A549 (cell line): ENCODE measurements at regions of chr17 and their contacts with region 1.

Region 1: DNA sequence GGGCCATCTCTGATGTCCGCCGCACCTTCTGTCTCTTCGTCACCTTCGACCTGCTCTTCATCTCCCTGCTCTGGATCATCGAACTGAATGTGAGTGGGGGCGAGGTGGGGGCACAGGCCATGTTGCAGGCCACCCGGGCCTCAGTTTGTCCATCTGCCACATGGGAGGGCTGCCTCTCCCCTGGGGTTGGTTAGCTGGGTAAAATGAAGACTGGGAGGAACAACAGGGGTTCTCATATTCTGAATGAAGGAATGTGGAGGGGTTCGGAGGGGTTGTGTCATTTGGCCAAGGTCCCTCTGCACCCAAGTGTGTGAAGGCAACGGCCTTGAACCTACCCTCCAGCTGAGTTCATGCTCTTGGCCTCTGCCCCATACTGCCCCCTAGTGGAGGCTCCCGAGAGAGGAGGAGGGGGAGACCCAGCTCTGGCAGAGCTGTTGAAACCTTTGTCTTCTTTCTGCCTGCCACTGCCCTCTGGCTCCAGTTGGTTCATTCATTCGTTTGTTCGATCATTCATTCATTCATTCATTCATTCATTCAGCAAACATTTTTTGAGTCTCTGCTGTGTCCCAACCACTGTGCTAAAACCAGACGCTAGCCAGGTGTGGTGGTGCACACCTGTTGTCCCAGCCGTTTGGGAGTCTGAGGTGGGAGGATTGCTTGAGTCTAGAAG is 11.4 kb upstream of the TCAP start:
- DNase-seq: peak; percentile 67 to 91
- ATAC-seq: peak; percentile 65 to 86; a peak in 5 of 6 replicates
- H3K4me3 ChIP-seq: no peak overlapping the region
- H3K27ac ChIP-seq: no peak overlapping the region
- H3K4me1 ChIP-seq: no peaks in the 10 kb centered on the region
- CTCF ChIP-seq: peak; percentile 90
- EP300 ChIP-seq: no peak
- POLR2A ChIP-seq: no peak
- RAD21 ChIP-seq: peak; percentile 28 to 41; a peak in 3 of 5 replicates

Region 2: DNA sequence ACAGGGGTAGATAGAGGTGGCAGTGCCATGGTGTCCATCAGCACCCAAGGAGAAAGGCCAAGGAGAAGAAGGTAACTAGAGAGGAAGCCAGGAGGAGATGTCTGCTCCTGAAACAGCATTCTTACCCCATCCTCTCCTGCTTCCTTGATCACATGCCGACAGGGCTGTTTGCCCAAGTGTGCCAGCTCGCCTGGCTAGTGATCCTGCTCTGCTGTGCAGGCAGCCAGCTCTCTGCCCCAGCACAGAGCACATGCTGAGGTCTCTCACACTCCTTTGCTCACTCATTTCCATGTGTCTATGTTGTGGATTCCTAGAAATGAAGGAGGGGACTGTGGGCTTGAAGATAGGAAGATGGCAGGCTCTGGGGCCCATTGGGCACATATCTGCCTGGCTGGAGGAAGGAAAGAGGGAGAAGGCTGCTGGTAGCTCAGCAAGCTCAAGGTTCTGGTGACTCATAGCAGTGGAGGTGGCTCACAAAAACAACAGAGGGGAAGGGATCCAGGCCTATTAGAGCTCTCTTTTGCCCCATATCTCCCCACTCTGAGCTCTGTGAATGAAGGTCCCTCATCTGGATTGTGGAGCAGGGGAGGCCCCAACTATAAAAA is 100.4 kb before region 1 on chr17:
- CTCF ChIA-PET with region 1: interaction called, 17 read pairs
- POLR2A ChIA-PET with region 1: interaction called, 4 read pairs
- DNase-seq: no peak
- ATAC-seq: peak in 1 of 2 experiments; percentile 37; a peak in 2 of 6 replicates
- H3K4me3 ChIP-seq: no peak overlapping the region
- H3K27ac ChIP-seq: no peak overlapping the region
- H3K4me1 ChIP-seq: no peaks in the 10 kb centered on the region
- CTCF ChIP-seq: no peak
- EP300 ChIP-seq: no peak
- POLR2A ChIP-seq: no peak
- RAD21 ChIP-seq: no peak

Region 3: GRCh38 chr17:39568702-39569101 is 85.1 kb before region 1 on chr17:
- CTCF ChIA-PET with region 1: no interaction called
- POLR2A ChIA-PET with region 1: no interaction called
- DNase-seq: no peak
- ATAC-seq: no peak
- H3K4me3 ChIP-seq: no peak overlapping the region
- H3K27ac ChIP-seq: no peak overlapping the region
- H3K4me1 ChIP-seq: no peaks in the 10 kb centered on the region
- CTCF ChIP-seq: no peak
- EP300 ChIP-seq: no peak
- POLR2A ChIP-seq: no peak
- RAD21 ChIP-seq: no peak